Heart left ventricle (tissue), 16 donors: ENCODE measurements at regions of chr12 and their contacts with region 1.

Region 1: GRCh38 chr12:14995583-14996425 is 23.0 kb downstream of the PDE6H start:
- DNase-seq: no peak
- ATAC-seq: peak in 2 of 4 donors; percentile 47 to 55
- H3K4me3 ChIP-seq: no peak overlapping the region
- H3K27ac ChIP-seq: peak overlapping the region in 1 of 12 donors; percentile 6
- H3K4me1 ChIP-seq: peaks cover 0 to 22% (median 1%) of the 10 kb centered on the region in 12 donors
- H3K27me3 ChIP-seq: no peaks in the 10 kb centered on the region
- CTCF ChIP-seq: peak; percentile 62 to 88 (median 72)
- POLR2A ChIP-seq: no peak

Region 2: GRCh38 chr12:14629832-14630710 is 365.7 kb before region 1 on chr12:
- intact Hi-C with region 1: loop called in 4 of 10 experiments (anchors 5 to 10 kb)
- DNase-seq: peak in 4 of 5 donors; percentile 55 to 67 (median 61)
- ATAC-seq: peak; percentile 87 to 99 (median 98)
- H3K4me3 ChIP-seq: no peak overlapping the region
- H3K27ac ChIP-seq: no peak overlapping the region
- H3K4me1 ChIP-seq: peaks cover 0 to 3% (median 0%) of the 10 kb centered on the region in 12 donors
- H3K27me3 ChIP-seq: no peaks in the 10 kb centered on the region
- CTCF ChIP-seq: peak; percentile 90 to 97 (median 94)
- POLR2A ChIP-seq: no peak

Region 3: GRCh38 chr12:14643251-14643650 is 352.6 kb before region 1 on chr12:
- intact Hi-C with region 1: loop called in 4 of 10 experiments (anchors 10 kb)
- DNase-seq: no peak
- ATAC-seq: no peak
- H3K4me3 ChIP-seq: no peak overlapping the region
- H3K27ac ChIP-seq: peak overlapping the region in 1 of 12 donors; percentile 27
- H3K4me1 ChIP-seq: peaks cover 0 to 25% (median 2%) of the 10 kb centered on the region in 12 donors
- H3K27me3 ChIP-seq: no peaks in the 10 kb centered on the region
- CTCF ChIP-seq: no peak
- POLR2A ChIP-seq: no peak

Region 4: DNA sequence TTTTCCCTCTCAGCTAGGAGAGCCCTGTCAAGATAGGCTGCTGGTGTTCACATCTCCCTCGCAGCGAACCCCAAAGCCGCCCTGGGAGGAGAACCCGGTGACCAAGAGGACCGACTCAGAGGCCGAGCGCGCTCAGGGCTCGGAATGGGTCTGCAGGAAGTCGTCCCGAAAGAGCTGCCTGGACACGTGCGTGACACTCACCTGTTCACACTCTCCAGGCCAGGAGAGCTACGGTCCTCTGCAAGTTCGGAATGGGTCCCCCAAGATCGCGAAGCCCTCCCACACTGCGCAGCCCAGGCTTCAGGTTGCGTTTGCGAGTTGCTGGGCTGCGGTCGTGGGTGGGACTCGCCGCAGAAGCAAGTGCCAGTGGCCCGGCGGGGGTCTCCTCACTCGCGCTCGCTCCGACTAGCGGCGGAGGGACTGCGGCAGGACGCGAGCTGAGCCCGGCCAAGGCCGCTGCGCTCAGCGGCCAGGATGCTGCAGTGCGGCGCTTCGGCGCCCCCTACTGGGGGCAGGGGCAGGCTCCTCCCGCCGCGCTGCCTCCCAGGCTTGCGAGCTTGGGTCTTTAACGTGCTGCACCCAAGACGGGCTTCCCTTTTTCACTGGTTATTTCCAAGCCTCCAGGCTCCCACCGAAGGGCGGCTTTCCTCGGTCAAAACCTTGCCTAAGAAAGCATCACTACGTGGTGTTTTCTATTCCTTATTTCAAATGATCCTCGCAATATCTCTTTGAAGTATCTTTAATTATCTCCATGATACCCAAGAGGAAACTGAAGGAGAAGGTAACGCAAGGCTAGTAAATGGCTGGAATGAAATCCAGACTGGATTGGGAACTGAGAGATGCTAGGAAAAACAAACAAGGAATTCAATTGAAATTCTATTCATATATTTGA is 225.4 kb after region 1 on chr12 and contains the start of gene RERG:
- intact Hi-C with region 1: loop called in 7 of 10 experiments (anchors 5 to 10 kb)
- DNase-seq: peak; percentile 78 to 92 (median 84)
- ATAC-seq: peak; percentile 84 to 100 (median 98)
- H3K4me3 ChIP-seq: peak within 1 kb of the TSS; percentile 44 to 75 (median 60)
- H3K27ac ChIP-seq: peak within 1 kb of the TSS; percentile 7 to 86 (median 80)
- H3K4me1 ChIP-seq: peaks cover 0 to 12% (median 5%) of the 10 kb centered on the region in 12 donors
- H3K27me3 ChIP-seq: peaks cover 0 to 35% (median 3%) of the 10 kb centered on the region in 9 donors
- CTCF ChIP-seq: peak; percentile 91 to 99 (median 98)
- POLR2A ChIP-seq: no peak
- total RNA-seq, gene RERG: 2.9 to 17.7 (median 4.2) TPM